Endothelial cell of umbilical vein (primary cell): ENCODE measurements at regions of chr3 and their contacts with region 1.

Region 1: GRCh38 chr3:71583566-71584449 is at the start of gene FOXP1:
- DNase-seq: peak; percentile 80
- H3K4me3 ChIP-seq: peak within 1 kb of the TSS; percentile 76 to 91 (median 84)
- H3K27ac ChIP-seq: peak within 1 kb of the TSS; percentile 78
- H3K4me1 ChIP-seq: peaks cover 41% of the 10 kb centered on the region
- H3K27me3 ChIP-seq: no peaks in the 10 kb centered on the region
- CTCF ChIP-seq: no peak
- POLR2A ChIP-seq: no peak
- total RNA-seq, gene FOXP1: 96.9 and 107 TPM in 2 replicates

Region 2: DNA sequence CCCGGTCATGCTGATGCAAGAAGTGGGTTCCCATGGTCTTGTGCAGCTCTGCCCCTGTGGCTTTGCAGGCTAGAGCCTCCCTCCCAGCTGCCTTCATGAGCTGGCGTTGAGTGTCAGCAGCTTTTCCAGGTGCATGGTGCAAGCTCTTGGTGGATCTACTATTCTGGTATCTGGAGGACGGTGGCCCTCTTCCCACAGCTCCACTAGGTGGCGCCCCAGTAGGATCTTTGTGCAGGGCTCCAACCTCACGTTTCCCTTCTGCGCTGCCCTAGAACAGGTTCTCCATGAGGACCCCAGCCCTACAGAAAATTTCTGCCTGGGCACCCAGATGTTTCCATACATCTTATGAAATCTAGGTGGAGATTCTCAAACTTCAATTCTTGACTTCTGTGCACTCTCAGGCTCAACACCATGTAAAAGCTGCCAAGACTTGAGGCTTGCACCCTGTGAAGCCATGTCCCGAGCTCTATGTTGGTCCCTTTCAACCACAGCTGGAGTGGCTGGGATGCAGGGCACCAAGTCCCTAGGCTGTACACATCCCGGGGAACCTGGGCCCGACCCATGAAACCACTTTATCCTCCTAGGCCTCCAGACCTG is 1033.0 kb before region 1 on chr3:
- CTCF ChIA-PET with region 1: interaction called, 19 read pairs
- POLR2A ChIA-PET with region 1: no interaction called
- dilution Hi-C with region 1: no loop called
- intact Hi-C with region 1: loop called (anchors 1 kb)
- DNase-seq: peak; percentile 75
- H3K4me3 ChIP-seq: no peak overlapping the region
- H3K27ac ChIP-seq: no peak overlapping the region
- H3K4me1 ChIP-seq: no peaks in the 10 kb centered on the region
- H3K27me3 ChIP-seq: no peaks in the 10 kb centered on the region
- CTCF ChIP-seq: peak; percentile 63 to 85
- POLR2A ChIP-seq: no peak

Region 3: GRCh38 chr3:71006810-71007785 is 576.7 kb before region 1 on chr3:
- CTCF ChIA-PET with region 1: interaction called, 14 read pairs
- POLR2A ChIA-PET with region 1: no interaction called
- dilution Hi-C with region 1: no loop called
- intact Hi-C with region 1: loop called (anchors 1 kb)
- DNase-seq: peak; percentile 75
- H3K4me3 ChIP-seq: no peak overlapping the region
- H3K27ac ChIP-seq: peak overlapping the region; percentile 53
- H3K4me1 ChIP-seq: peaks cover 54% of the 10 kb centered on the region
- H3K27me3 ChIP-seq: no peaks in the 10 kb centered on the region
- CTCF ChIP-seq: peak in 1 of 2 donors; percentile 15
- POLR2A ChIP-seq: no peak

Region 4: DNA sequence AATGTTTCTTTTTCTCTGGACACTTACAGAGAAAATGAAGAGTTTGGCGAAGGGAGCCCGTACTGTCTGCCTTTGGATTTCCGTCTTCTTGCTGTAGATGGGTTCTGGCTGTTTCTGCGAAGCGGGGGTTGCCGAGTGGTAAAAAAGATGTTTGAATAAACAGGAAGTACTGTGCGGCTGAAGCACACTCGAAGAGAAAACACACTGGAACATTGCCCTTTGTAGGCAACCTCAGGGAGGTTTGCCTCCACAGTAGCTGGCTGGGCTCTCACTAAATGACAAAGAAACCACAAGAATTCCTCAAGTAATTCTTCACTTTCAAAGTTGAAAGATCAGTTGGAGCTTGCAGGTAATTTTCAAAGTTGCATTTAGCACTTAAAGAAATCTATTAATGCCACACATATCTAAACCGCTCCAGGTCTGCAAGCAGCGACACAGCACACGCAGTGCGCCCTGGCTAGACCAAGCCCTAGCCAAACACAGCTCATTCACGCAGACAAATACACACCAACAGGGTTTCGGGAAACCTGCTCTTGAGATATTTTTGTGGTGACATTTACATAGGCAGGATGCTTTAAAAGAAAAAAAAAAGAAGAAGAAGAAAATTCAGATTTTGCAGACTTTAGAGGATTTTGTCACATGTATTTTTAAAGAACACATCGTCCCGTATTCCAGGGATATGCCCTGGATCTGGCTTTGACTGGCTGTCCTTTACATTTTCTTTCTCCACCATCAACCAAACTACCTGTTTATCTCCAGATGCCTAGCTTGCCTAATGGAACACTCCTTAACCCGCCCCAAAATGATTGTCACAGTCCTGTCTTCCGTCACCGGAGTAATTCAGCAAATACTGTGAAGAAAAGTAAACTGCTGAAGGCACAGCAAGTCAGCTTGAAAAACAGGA is 453.1 kb before region 1 on chr3:
- CTCF ChIA-PET with region 1: no interaction called
- POLR2A ChIA-PET with region 1: no interaction called
- dilution Hi-C with region 1: no loop called
- intact Hi-C with region 1: loop called (anchors 2 kb)
- DNase-seq: peak; percentile 84
- H3K4me3 ChIP-seq: peak overlapping the region; percentile 24 to 91 (median 87)
- H3K27ac ChIP-seq: peak overlapping the region; percentile 93
- H3K4me1 ChIP-seq: peaks cover 24% of the 10 kb centered on the region
- H3K27me3 ChIP-seq: no peaks in the 10 kb centered on the region
- CTCF ChIP-seq: no peak
- POLR2A ChIP-seq: no peak

Region 5: DNA sequence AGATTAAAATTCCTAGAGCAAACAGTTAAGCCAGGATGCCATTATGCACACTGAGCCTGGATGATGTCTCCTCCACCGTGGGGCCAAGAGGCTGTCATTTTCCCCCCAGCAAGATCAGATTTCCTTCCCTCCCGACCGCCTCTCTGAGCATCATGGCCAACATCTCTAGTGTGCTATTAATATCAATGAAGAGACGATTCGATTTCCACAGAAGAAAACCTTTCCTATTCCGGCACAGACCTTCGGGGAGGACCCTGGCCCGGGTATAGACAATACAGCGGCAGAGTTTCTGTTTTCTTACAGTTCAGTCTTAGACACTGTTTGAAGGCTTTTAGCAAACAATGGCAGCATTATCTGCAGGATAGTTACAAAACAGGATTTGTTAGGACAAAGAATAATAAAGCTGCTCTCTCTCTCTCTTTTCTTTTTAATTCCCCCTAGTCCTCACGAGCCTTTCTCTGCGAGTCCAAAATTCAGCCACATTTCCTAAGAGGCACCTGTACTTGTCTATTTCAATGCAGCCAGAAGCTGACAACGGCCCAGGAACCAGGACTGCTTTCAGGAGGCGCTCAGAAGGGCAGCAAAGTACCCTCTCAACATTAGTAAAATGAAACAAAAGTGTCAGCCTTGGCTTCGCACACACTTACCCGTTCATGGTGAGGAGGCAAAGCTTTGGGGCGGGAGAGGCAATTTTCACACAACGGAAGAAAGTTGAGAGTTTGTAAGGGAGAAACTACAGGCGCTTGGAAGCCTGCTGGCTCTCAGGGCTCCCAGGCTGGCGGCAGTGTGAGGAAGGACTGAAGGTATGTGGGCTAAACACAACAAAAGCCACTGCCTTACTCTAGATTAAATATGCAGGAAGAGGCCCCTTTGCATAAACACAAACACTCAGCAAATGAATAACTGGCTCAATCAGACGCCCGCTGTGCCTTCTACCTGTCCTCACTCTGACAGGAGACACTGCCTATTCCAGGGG is 278.3 kb before region 1 on chr3:
- CTCF ChIA-PET with region 1: interaction called, 5 read pairs
- POLR2A ChIA-PET with region 1: no interaction called
- dilution Hi-C with region 1: no loop called
- intact Hi-C with region 1: loop called (anchors 1 kb)
- DNase-seq: peak; percentile 71
- H3K4me3 ChIP-seq: peak overlapping the region; percentile 24 to 60 (median 41)
- H3K27ac ChIP-seq: peak overlapping the region; percentile 19
- H3K4me1 ChIP-seq: peaks cover 24% of the 10 kb centered on the region
- H3K27me3 ChIP-seq: no peaks in the 10 kb centered on the region
- CTCF ChIP-seq: no peak
- POLR2A ChIP-seq: no peak

Region 6: DNA sequence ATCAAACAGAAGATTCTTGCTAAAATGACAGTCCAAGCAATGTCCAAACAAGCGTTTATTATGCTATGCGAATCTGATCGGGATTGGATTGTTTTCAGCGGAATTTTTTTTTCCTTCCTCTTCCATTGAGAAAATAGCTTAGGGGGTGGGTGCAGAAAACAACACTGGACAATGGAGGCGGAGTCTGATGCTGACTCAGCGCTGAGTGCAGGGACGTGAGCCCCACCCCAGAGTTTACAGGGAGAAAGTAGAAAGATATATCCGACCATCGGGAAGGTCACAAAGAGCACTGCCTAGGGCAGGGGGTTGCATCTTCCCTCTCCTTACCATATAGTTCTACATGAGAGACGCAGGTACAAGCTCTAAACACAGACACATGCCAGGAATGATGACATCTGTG is 117.3 kb before region 1 on chr3:
- CTCF ChIA-PET with region 1: no interaction called
- POLR2A ChIA-PET with region 1: no interaction called
- dilution Hi-C with region 1: no loop called
- intact Hi-C with region 1: loop called (anchors 2 kb)
- DNase-seq: peak; percentile 89
- H3K4me3 ChIP-seq: peak overlapping the region in 1 of 3 experiments; percentile 9
- H3K27ac ChIP-seq: no peak overlapping the region
- H3K4me1 ChIP-seq: peaks cover 16% of the 10 kb centered on the region
- H3K27me3 ChIP-seq: no peaks in the 10 kb centered on the region
- CTCF ChIP-seq: no peak
- POLR2A ChIP-seq: no peak

Region 7: GRCh38 chr3:71681224-71681668 is 97.4 kb after region 1 on chr3:
- CTCF ChIA-PET with region 1: interaction called, 14 read pairs
- POLR2A ChIA-PET with region 1: no interaction called
- dilution Hi-C with region 1: no loop called
- intact Hi-C with region 1: loop called (anchors 1 kb)
- DNase-seq: peak; percentile 73
- H3K4me3 ChIP-seq: no peak overlapping the region
- H3K27ac ChIP-seq: no peak overlapping the region
- H3K4me1 ChIP-seq: peaks cover 5% of the 10 kb centered on the region
- H3K27me3 ChIP-seq: no peaks in the 10 kb centered on the region
- CTCF ChIP-seq: peak; percentile 75 to 80
- POLR2A ChIP-seq: no peak